ENCODE measurements at regions of chr12 and their contacts with region 1.

Region 1: GRCh38 chr12:3747543-3747942 is 5.4 kb downstream of the CRACR2A start:
- DNase-seq: no peak
- H3K4me3 ChIP-seq: no peak overlapping the region
- H3K27ac ChIP-seq: no peak overlapping the region
- H3K4me1 ChIP-seq: no peaks in the 10 kb centered on the region
- H3K27me3 ChIP-seq: no peaks in the 10 kb centered on the region
- CTCF ChIP-seq: no peak

Region 2: GRCh38 chr12:3480764-3481163 is 266.8 kb before region 1 on chr12:
- CTCF ChIA-PET with region 1: no interaction called
- dilution Hi-C with region 1: no loop called
- in situ Hi-C with region 1: no loop called
- intact Hi-C with region 1: no loop called
- DNase-seq: no peak
- H3K4me3 ChIP-seq: no peak overlapping the region
- H3K27ac ChIP-seq: no peak overlapping the region
- H3K4me1 ChIP-seq: no peaks in the 10 kb centered on the region
- H3K27me3 ChIP-seq: no peaks in the 10 kb centered on the region
- CTCF ChIP-seq: no peak

Region 3: DNA sequence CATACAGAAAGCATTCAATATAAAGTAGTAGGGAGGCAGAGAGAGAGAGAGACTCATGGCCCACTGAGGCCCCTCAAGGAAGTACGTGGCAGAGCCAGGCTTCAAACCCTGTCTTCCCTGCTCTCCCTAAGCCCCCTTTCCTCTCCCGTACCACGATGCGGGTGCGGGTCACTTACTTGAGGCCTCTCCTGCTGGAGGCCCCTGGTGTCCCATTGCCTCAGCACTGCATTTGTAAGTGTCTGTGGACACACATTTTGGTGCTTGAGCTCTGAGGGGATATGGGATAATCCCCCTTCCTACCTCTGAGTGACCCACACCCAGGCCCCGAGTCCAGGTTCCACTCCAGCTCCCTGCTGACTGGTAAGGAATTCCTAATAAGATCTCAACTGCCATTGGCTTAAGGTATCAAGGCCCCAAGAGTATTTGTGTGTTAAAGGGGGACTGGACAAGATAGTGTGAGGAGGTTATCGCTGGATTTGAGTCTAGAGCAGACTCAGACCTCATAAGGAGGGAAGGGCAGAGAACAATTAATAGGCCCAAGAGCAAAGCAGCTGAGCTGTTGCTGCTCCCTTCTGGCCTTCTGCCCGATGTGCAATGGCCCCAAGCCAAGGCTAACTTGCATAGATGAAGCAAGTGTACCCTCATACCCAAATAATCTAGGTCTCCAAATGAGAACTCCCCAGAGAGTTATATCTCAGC is 66.5 kb before region 1 on chr12:
- CTCF ChIA-PET with region 1: no interaction called
- dilution Hi-C with region 1: loop called (anchors 5 kb)
- in situ Hi-C with region 1: no loop called
- intact Hi-C with region 1: no loop called
- DNase-seq: peak; percentile 14
- H3K4me3 ChIP-seq: no peak overlapping the region
- H3K27ac ChIP-seq: no peak overlapping the region
- H3K4me1 ChIP-seq: no peaks in the 10 kb centered on the region
- H3K27me3 ChIP-seq: no peaks in the 10 kb centered on the region
- CTCF ChIP-seq: peak; percentile 33 to 41

Measured in mammary epithelial cell (primary cell).